ENCODE measurements at regions of chr4 and their contacts with region 1.

Region 1: DNA sequence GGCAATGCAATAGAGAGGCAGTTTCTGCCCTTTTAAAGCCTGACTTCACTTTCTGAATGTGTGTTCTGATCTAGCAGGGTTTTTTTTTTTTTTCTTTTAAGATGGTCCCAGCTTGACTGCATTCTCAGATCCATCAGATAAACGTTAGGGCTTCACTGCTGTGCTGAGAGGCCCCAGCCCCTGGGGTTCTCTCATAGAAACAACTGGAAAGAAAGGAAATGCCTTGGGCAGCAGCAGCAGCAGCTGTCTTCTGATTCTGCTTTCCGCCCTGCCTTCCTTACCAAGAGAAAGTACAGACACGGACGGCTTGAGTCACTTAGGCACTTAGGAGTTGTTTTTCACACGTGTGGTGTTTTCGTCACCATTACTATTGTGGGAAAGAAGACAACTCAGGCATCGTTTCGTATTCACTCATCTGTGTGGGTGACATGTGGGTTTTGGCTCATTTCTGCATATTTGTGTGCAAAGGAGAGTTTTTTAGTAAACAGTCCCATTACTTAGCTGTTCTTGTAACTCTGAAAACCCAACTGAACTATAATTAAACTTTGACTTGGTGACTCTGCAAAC is 172.0 kb downstream of the PTTG2 start:
- DNase-seq: peak; percentile 84
- ATAC-seq: peak; percentile 62
- H3K4me3 Mint-ChIP-seq: peak overlapping the region; percentile 57
- H3K27ac Mint-ChIP-seq: peak overlapping the region; percentile 96
- H3K4me1 Mint-ChIP-seq: peaks cover 74% of the 10 kb centered on the region
- H3K27me3 Mint-ChIP-seq: peaks cover 3% of the 10 kb centered on the region

Region 2: GRCh38 chr4:37686373-37687193 is 445.6 kb before region 1 on chr4 and contains the start of gene RELL1:
- CTCF ChIA-PET with region 1: no interaction called
- POLR2A ChIA-PET with region 1: no interaction called
- intact Hi-C with region 1: loop called in 1 of 2 experiments (anchors 5 kb)
- DNase-seq: peak; percentile 99
- ATAC-seq: peak; percentile 89
- H3K4me3 Mint-ChIP-seq: peak within 1 kb of the TSS; percentile 84
- H3K27ac Mint-ChIP-seq: peak within 1 kb of the TSS; percentile 94
- H3K4me1 Mint-ChIP-seq: peaks cover 35% of the 10 kb centered on the region
- H3K27me3 Mint-ChIP-seq: no peaks in the 10 kb centered on the region
- total RNA-seq, gene RELL1: 8.5 to 9.5 TPM

Region 3: GRCh38 chr4:38062088-38062893 is 69.9 kb before region 1 on chr4:
- CTCF ChIA-PET with region 1: no interaction called
- POLR2A ChIA-PET with region 1: no interaction called
- intact Hi-C with region 1: loop called (anchors 1 to 2 kb)
- DNase-seq: peak; percentile 82
- ATAC-seq: peak; percentile 79
- H3K4me3 Mint-ChIP-seq: peak overlapping the region; percentile 75
- H3K27ac Mint-ChIP-seq: peak overlapping the region; percentile 87
- H3K4me1 Mint-ChIP-seq: peaks cover 14% of the 10 kb centered on the region
- H3K27me3 Mint-ChIP-seq: no peaks in the 10 kb centered on the region

Region 4: DNA sequence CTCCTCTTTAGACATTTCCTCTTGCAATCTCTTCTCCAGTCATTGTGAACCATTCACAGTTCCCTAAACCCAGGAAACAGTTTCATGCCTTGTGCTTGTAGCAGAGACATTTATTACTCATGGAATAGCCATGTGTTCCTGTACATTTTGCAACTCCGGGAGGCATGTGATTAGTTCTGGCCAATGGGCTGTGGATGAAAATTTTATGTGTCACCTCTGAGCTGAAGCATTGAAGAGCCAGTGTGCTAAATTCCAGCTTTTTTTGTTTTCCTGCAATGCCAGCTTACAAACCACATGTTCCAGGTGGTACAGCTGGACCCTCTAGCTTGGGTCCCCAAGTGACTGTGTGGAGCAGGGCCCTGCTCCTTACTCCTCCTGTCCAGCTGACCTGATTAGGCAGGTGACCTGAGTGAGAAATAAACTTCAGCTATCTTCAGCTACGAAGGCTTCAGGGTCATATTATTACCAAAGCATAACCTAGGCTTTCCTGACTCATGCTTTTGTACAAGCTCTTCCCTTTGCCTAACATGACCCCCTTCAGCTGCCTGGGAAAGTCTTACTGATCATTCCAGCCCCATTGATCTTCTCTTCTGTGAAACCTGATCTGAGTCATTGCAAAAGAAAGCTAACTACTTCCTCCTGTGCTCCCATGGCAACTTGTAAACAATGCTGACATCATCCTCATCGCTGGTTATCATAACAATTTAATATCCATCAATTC is 28.5 kb after region 1 on chr4:
- CTCF ChIA-PET with region 1: interaction called, 21 read pairs
- POLR2A ChIA-PET with region 1: interaction called, 21 read pairs
- intact Hi-C with region 1: loop called (anchors 1 kb)
- DNase-seq: peak; percentile 69
- ATAC-seq: peak; percentile 79
- H3K4me3 Mint-ChIP-seq: no peak overlapping the region
- H3K27ac Mint-ChIP-seq: peak overlapping the region; percentile 73
- H3K4me1 Mint-ChIP-seq: peaks cover 70% of the 10 kb centered on the region
- H3K27me3 Mint-ChIP-seq: no peaks in the 10 kb centered on the region

Region 5: DNA sequence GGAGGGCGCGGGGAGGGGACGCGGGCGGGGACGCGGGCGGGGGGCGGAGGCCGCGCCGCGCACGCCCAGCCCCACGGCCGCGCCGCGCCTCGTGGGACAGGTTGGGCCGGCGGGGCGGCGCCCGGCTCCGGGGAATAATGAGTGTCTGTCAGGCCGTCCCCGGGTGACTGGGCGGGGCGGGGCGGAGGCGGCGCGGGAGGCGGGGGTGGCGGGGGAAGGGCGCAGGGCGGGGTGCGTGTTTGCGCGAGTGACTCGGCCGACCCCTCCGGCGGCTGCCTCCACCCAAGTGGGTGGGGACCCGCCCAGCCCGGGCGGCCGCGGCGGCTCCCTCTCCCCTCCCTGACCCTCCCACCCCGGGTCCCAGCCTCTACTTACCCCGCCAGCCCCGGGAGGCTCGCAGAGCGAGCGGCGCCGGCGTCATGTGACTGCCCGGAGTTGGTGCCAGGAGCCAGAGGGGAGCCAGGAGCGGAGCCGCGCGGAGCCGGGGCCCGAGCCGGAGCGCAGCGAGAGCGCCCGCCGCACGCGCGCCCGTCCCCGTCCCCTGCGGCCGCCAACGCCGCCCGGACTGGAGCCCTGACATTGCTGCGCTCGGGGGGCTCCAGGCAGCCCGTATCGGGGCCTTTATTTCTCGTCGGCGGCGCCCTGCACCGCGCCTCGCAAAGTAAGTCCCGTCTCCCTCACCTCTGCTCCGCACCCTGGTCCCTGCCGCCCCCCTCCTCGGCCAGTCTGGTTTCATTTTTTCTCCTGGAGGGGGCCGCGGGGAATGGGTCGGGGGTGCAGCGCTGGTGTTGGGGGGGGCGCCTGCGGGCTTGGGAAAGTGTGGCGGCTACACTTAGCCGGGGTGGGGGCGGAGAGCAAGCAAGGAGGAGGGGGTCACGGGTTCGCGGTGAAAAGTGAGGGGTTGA is 531.9 kb after region 1 on chr4 and contains the start of gene KLF3:
- CTCF ChIA-PET with region 1: interaction called, 4 read pairs
- POLR2A ChIA-PET with region 1: no interaction called
- intact Hi-C with region 1: loop called (anchors 2 kb)
- DNase-seq: peak; percentile 84
- ATAC-seq: peak; percentile 62
- H3K4me3 Mint-ChIP-seq: peak within 1 kb of the TSS; percentile 88
- H3K27ac Mint-ChIP-seq: peak within 1 kb of the TSS; percentile 78
- H3K4me1 Mint-ChIP-seq: peaks cover 61% of the 10 kb centered on the region
- H3K27me3 Mint-ChIP-seq: no peaks in the 10 kb centered on the region
- total RNA-seq, gene KLF3: 6.1 to 6.2 TPM